Breast epithelium (tissue), 4 donors: ENCODE measurements at regions of chr7 and their contacts with region 1.

Region 1: GRCh38 chr7:131733604-131734003 is 177.2 kb upstream of the PODXL start:
- DNase-seq: no peak
- H3K4me3 ChIP-seq: no peak overlapping the region
- H3K27ac ChIP-seq: no peak overlapping the region
- H3K4me1 ChIP-seq: no peaks in the 10 kb centered on the region
- H3K27me3 ChIP-seq: peaks cover 0 to 15% of the 10 kb centered on the region in 2 donors
- CTCF ChIP-seq: no peak
- POLR2A ChIP-seq: no peak

Region 2: GRCh38 chr7:131895541-131896173 is 162.1 kb after region 1 on chr7:
- intact Hi-C with region 1: loop called (anchors 2 kb)
- DNase-seq: no peak
- H3K4me3 ChIP-seq: no peak overlapping the region
- H3K27ac ChIP-seq: no peak overlapping the region
- H3K4me1 ChIP-seq: no peaks in the 10 kb centered on the region
- H3K27me3 ChIP-seq: no peaks in the 10 kb centered on the region
- CTCF ChIP-seq: no peak
- POLR2A ChIP-seq: no peak

Region 3: GRCh38 chr7:132307465-132307864 is 573.9 kb after region 1 on chr7:
- intact Hi-C with region 1: no loop called
- DNase-seq: no peak
- H3K4me3 ChIP-seq: no peak overlapping the region
- H3K27ac ChIP-seq: no peak overlapping the region
- H3K4me1 ChIP-seq: no peaks in the 10 kb centered on the region
- H3K27me3 ChIP-seq: no peaks in the 10 kb centered on the region
- CTCF ChIP-seq: no peak
- POLR2A ChIP-seq: no peak